BJ (cell line): ENCODE measurements at regions of chr15 and their contacts with region 1.

Region 1: DNA sequence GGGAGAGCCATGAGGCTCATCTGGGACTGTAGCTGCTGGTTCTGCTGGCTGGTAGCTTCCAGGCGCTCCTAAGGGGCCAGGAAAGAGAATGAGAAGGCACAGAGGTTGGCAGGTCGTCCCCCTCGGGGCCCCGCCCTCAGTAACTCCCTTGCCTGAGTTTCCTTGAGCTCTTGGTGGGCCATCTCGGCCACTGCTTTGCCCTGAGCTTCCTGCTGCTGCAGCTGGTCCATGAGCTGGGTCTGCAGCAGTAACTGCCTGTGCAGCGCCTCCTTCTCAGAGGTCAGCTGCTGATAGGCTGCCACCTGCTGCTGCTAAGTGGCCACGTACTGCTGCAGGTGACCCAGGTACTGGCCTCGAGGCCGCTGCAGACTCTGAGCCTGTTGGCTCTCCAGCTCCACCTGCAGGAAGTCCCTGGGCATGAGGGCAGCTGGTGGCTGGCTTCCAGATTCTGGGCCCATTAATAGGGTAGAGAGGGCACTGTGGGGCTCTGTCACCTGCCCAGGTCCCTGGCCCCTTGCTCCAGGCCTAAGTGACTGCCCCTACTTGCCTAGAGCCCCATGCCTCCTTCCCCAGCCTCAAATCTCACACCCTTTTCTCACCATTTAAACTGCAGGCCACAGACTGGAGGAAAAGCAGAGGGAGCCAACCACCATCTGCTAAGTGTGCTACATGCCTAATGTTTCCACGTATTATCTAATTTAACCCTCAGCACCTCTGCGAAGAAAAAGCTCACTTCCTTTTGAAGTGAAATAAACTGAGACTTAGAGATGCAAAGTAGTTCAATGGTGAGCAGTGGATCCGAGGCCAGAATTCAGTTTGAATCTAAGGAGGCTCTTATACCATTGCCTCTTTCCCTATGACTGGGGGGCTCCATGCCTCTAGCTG is 10.8 kb upstream of the VPS33B start:
- DNase-seq: no peak
- H3K4me3 ChIP-seq: no peak overlapping the region
- H3K27me3 ChIP-seq: peaks cover 7% of the 10 kb centered on the region
- CTCF ChIP-seq: peak; percentile 70

Region 2: DNA sequence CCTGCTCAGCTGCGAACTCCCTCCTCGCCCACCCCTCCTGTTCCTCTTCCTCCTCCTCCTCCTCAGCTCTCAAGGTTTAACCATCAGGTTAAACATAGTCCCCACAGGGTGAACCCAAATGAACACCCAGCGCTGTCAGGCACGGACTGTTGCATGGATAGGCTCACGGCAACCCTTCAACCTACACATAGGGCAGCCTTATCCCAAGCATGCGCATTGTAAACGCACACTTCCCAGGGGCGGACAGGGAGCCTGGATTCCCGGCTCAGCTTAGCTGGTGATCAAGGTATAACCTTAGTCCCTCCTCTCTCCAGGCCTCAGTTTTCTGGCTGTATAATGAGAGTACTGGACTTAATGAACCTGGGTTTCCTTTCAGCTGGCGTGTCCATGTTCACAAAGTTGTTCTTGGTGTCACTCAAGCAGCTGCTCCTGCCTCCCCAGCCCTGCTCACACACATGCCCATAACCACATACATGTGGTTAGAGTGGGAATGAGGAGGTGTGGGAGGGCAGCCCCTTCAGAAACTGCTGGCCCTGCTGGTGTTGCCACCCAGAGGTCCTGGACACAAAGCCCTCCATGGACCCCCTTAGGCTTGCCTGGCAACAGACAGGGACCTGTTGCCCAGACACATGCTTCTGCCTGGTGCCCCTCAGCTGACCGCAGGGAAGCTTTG is 10.2 kb after region 1 on chr15:
- CTCF ChIA-PET with region 1: interaction called, 12 read pairs
- POLR2A ChIA-PET with region 1: interaction called, 3 read pairs
- DNase-seq: no peak
- H3K4me3 ChIP-seq: no peak overlapping the region
- H3K27me3 ChIP-seq: peaks cover 2% of the 10 kb centered on the region; the same call in 1 of the 2 replicates
- CTCF ChIP-seq: no peak

Region 3: DNA sequence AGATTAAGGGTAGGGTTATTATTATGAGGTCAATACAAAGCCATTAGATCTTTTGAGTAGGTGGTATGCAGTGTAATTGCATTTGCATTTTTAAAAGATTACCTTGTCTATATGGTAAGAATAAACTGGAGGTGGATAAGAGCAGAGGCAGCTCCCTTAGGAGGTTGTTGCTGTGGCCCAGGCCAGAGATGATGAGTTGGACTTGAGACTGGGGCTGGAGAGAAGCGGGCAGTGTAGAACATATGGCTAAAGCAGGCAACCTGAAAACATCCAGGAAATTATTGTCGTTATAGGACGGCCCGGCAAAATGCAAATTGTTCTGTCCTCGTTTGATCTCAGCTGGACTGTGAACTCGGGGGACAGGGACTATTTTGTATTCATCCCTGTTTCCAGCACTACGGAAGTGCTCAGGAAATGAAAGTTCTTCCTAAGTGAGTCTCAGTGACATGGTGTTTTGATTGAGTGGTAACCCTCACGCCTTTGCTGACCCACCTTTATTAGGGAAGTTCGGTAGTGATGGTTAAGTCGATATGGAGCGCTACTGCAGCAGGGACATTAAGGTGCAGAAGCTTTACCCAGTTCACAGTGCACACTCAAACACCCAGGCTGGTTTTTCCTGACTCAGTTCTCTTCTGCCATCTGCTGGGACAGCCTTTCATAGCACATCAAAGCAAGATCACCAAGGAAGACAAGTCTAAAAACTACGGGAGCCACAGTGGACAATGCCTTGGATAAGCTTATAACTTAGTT is 16.4 kb after region 1 on chr15:
- CTCF ChIA-PET with region 1: interaction called, 12 read pairs
- POLR2A ChIA-PET with region 1: interaction called, 3 read pairs
- DNase-seq: no peak
- H3K4me3 ChIP-seq: no peak overlapping the region
- H3K27me3 ChIP-seq: no peaks in the 10 kb centered on the region; the same call in 1 of the 2 replicates
- CTCF ChIP-seq: peak; percentile 84

Region 4: DNA sequence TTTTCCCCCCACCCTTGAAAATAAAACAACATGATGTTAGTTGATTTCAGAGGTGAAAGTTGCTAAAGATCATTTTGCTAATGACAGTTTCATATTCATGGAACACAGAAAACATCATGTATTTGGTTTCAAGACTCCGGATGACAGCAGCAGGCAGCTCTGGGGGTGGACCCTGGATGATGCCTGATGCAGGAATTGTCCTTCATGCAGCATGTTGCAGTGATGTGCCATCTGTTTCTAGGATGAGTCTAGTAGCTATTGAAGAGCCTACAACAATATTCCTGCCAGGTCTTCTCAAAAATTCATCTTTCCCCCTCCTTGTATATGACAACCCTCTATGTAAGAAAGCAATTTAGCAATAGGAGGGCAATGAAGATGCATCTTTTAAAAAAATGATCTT is 175.2 kb after region 1 on chr15:
- CTCF ChIA-PET with region 1: no interaction called
- POLR2A ChIA-PET with region 1: no interaction called
- DNase-seq: no peak
- H3K4me3 ChIP-seq: no peak overlapping the region
- H3K27me3 ChIP-seq: no peaks in the 10 kb centered on the region
- CTCF ChIP-seq: no peak